HEK293T (cell line): ENCODE measurements at regions of chr6 and their contacts with region 1.

Region 1: GRCh38 chr6:30590994-30591393 is 19.8 kb downstream of the ABCF1 start:
- DNase-seq: no peak

Region 2: GRCh38 chr6:30508890-30509736 is 81.9 kb before region 1 on chr6:
- CTCF ChIA-PET with region 1: no interaction called
- POLR2A ChIA-PET with region 1: no interaction called
- DNase-seq: no peak

Region 3: DNA sequence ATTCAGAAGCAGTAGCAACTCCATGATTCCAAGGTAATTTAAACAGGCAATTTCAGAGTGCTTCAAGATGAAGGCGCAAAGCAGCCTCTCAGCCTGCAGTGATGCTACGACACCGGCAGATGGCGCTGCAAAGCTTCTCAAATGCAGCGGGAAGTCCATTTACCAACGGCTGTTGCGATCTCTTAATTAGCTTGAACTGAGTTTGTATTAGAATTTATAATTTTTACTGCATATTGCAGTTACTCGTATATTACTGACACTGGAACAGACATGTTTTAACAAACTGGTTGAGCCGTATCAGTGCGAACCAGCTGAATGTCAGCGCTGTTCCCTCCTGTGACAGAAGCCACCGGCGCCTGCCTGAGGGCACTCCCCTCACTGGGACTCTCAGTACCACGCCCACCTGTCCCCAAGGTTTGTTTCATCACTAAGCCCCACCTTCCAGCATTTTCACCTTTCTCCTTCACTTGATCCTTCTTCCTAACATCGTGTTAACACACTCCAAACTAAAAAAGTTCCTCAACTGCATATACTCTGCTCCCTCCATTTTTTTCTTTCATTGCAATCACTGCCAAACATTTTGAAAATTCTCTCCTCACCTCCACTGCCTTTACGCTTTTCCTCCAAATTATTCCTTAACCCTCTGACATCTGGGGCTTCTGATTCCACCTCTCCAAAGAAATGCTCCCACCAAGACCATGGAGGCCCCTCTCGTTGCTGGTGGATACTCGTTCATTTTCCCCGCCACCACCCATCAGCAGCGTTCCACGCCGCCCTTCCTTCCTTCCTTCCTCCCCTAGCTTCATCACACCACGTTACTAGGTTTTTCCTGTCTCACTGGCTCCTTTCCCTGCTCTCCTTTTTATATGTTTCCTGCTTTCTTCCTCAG is 49.2 kb before region 1 on chr6:
- CTCF ChIA-PET with region 1: interaction called, 18 read pairs
- POLR2A ChIA-PET with region 1: no interaction called
- DNase-seq: peak; percentile 74